MCF 10A (cell line): ENCODE measurements at regions of chr16 and their contacts with region 1.

Region 1: DNA sequence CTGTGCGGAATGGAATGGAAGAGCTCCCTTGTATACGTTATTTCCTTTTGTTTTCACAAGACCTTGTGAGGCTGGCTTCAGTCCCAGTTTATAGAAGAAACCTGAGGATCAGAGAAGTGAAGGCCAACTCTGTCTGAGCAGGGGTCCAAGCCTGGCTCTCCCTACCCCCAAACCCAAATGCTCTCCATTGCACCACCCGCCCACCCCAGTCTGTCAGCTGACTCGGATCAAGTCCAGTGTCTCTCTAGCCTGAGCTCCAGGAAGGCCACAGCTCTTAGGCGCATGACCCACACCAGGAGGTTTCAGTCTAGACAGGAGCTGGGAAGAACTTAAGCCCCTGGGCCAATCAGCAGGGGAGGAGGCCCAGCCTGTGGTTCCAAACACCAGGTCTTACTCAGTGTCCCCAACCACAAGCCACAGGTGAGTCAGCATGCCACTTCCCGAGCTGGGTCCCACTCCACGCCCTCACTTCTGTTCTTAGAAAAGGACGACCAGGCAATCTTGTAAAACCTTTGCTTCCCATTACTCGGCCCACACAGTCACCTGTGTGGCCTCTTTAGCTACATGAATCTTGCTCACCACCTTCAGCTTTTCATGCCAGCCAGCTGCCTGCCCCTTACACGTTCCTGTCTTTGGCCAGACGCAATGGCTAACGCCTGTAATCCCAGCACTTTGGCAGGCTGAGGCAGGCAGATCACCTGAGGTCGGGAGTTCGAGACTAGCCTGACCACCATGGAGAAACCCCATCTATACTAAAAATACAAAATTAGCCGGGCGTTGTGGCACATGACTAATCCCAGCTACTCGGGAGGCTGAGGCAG is 27.8 kb downstream of the TK2 start:
- DNase-seq: peak; percentile 86
- H3K4me3 Mint-ChIP-seq: no peak overlapping the region
- H3K27ac Mint-ChIP-seq: peak overlapping the region; percentile 71
- H3K4me1 Mint-ChIP-seq: peaks cover 26% of the 10 kb centered on the region
- H3K27me3 Mint-ChIP-seq: no peaks in the 10 kb centered on the region
- CTCF ChIP-seq: no peak

Region 2: GRCh38 chr16:66552286-66553177 is 30.4 kb after region 1 on chr16 and contains the start of gene CKLF:
- CTCF ChIA-PET with region 1: interaction called, 5 read pairs
- POLR2A ChIA-PET with region 1: interaction called, 11 read pairs
- intact Hi-C with region 1: no loop called
- DNase-seq: peak; percentile 88
- H3K4me3 Mint-ChIP-seq: peak within 1 kb of the TSS; percentile 89
- H3K27ac Mint-ChIP-seq: peak within 1 kb of the TSS; percentile 86
- H3K4me1 Mint-ChIP-seq: peaks cover 52% of the 10 kb centered on the region
- H3K27me3 Mint-ChIP-seq: no peaks in the 10 kb centered on the region
- CTCF ChIP-seq: no peak
- total RNA-seq, gene CKLF: 41.3 and 57.8 TPM in 2 replicates

Region 3: GRCh38 chr16:66801320-66802105 is 279.4 kb after region 1 on chr16 and contains the start of gene TERB1:
- CTCF ChIA-PET with region 1: no interaction called
- POLR2A ChIA-PET with region 1: no interaction called
- intact Hi-C with region 1: no loop called
- DNase-seq: no peak
- H3K4me3 Mint-ChIP-seq: no peak within 1 kb of the TSS
- H3K27ac Mint-ChIP-seq: no peak within 1 kb of the TSS
- H3K4me1 Mint-ChIP-seq: no peaks in the 10 kb centered on the region
- H3K27me3 Mint-ChIP-seq: no peaks in the 10 kb centered on the region
- CTCF ChIP-seq: no peak
- total RNA-seq, gene TERB1: 0.26 and 0.69 TPM in 2 replicates